ENCODE measurements at regions of chr11 and their contacts with region 1.

Region 1: GRCh38 chr11:9137293-9138132 is 46.1 kb upstream of the SCUBE2 start:
- DNase-seq: peak; percentile 67 to 78
- H3K4me3 ChIP-seq: no peak overlapping the region
- H3K27ac ChIP-seq: peak overlapping the region; percentile 20 to 29
- H3K4me1 ChIP-seq: no peaks in the 10 kb centered on the region
- H3K27me3 ChIP-seq: no peaks in the 10 kb centered on the region
- CTCF ChIP-seq: peak; percentile 88 to 95 (median 92)
- POLR2A ChIP-seq: peak in 1 of 2 donors; percentile 12

Region 2: GRCh38 chr11:9015677-9016076 is 121.8 kb before region 1 on chr11:
- intact Hi-C with region 1: loop called (anchors 10 kb)
- DNase-seq: peak; percentile 50 to 68
- H3K4me3 ChIP-seq: no peak overlapping the region
- H3K27ac ChIP-seq: no peak overlapping the region
- H3K4me1 ChIP-seq: no peaks in the 10 kb centered on the region
- H3K27me3 ChIP-seq: no peaks in the 10 kb centered on the region
- CTCF ChIP-seq: peak; percentile 68 to 81 (median 71)
- POLR2A ChIP-seq: no peak

Region 3: GRCh38 chr11:9222654-9223053 is 85.1 kb after region 1 on chr11:
- intact Hi-C with region 1: no loop called
- DNase-seq: no peak
- H3K4me3 ChIP-seq: no peak overlapping the region
- H3K27ac ChIP-seq: no peak overlapping the region
- H3K4me1 ChIP-seq: no peaks in the 10 kb centered on the region
- H3K27me3 ChIP-seq: no peaks in the 10 kb centered on the region
- CTCF ChIP-seq: no peak
- POLR2A ChIP-seq: no peak

Region 4: DNA sequence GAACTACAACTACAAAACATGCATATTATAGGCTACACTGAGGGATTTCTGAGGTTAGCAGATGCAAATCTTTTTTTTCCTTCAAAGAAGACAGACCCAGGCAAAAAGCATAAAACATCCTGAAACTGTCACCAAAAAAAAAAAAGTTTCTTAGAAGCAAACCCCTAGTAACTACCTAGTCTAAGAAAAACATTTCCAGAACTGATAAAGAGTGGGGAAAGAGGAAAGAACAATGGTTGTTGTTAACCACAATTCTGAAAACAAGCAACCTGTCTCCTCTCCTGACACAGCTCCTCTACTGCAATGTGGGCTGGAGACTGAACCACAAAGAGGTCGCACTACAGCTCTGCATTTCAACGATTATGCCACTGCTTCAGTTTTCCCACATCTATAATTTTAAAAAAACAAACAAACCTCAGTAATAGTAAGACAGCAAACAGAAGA is 112.6 kb after region 1 on chr11:
- intact Hi-C with region 1: no loop called
- DNase-seq: no peak
- H3K4me3 ChIP-seq: no peak overlapping the region
- H3K27ac ChIP-seq: no peak overlapping the region
- H3K4me1 ChIP-seq: no peaks in the 10 kb centered on the region
- H3K27me3 ChIP-seq: no peaks in the 10 kb centered on the region
- CTCF ChIP-seq: no peak
- POLR2A ChIP-seq: no peak

Measured in uterus (tissue), 4 donors.